ENCODE measurements at regions of chr7 and their contacts with region 1.

Region 1: DNA sequence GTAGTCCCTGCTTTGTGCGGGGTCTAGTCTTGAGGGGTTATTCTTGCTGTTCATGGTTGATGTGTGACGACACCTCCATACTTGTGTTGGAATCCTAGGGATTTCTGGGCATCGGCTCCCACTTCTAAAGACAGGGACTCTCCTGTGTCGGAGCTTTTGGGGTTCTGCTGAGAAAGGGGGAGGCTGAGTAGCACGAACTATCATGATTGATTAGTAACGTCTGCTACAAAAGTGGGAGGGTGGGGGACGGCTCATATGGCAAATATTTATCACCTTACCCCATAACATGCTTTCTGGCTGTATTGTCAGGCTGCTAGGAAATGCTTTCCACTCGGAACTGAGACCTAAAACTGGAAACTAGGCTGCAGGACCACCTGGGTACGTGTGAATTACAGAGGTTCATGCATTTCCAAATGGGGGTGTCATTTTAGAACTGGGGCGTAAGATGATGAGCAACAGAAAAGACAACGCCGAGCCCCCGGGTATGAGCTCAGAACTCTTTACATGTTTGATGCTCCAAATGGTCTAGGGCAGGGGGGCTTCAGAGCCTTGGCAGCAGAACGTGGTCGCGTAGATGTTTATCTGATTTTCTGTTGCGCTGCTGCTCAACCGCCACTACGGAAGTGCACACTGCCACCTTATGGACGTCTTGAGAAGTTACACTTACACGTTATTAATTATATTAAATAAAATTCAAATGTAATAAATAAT is 15.1 kb upstream of the NME8 start:
- DNase-seq: peak in 8 of 10 donors; percentile 22 to 90 (median 60)

Region 2: DNA sequence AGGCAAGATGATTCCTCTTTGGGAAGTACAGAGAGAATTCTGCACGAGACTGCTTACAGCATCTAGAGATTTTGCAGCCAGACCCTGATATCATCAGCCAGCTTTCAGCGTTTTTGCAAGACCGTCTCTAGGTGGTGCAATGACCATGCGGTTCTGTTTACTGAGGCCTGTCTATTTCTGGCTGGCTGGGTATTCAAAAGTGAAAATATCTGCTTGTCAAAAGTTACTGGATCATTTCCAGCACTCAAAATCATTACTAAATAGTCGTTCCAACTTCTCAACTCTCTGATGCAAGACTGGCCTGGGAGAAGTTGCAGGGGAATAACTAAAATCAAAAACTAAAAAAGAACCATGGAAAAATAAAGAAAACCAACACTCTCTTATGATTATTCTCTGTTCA is 624.7 kb before region 1 on chr7:
- intact Hi-C with region 1: loop called (anchors 2 kb)
- DNase-seq: peak in 7 of 10 donors; percentile 50 to 93 (median 69)

Region 3: GRCh38 chr7:37234928-37235327 is 598.3 kb before region 1 on chr7:
- intact Hi-C with region 1: loop called (anchors 10 kb)
- DNase-seq: peak in 1 of 10 donors; percentile 37

Region 4: DNA sequence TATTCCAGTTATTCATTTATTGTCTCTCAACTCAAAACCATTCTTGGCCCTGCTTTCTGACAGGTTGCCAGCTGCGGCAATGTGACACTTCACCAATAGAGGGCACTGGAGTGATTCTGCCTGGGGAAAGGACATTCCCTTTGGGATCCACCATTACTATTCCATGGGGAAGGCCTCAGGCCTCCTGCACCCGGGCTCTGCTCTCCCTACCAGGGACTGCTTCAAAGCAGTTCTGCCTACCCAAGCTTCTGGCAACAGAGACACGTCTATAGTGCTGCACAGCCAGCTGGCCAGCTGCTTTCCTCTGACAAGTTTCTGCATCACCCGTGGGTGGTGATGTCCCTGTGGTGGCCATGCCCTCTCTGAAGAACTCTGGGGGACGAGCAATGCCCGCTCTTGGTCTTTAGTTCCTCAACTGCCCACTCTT is 548.4 kb before region 1 on chr7:
- intact Hi-C with region 1: loop called (anchors 2 kb)
- DNase-seq: peak; percentile 39 to 95 (median 72)

Region 5: DNA sequence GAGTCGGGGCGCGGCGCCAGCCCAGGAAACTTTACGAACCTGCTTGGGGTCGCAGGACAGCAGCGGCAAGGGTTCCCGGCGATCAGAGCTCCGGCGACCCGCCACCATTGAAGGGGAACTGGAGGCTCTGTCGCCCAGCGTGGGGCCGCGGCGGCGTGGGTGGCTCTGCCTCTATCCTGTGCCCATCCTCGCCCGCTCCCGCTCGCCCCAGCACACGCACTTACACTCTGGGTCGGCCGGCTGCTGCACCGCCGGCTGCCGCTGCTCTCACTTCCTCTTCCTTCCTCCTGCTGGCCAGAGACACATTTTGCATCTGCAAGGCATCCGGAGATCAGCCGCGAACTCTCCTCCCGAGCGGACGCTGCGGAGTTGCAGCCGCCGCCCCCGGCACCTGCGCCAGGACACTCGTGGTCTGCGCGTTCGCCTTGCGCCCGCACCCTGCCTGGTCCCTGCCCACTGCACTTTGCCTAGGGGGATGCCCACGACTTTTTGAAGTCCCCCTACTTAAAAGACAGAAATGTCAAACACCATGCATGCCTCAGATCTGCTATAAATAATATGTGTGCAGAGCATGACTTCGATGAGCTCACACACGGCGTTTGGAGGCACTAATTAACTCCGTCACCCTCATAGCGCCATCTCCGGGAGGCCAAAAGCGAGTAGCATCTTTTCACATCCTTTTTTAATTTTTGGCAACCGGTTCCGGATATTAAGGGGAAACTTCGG is 384.5 kb before region 1 on chr7 and contains the start of gene ELMO1:
- intact Hi-C with region 1: loop called (anchors 10 kb)
- DNase-seq: peak; percentile 40 to 93 (median 58)

Region 6: GRCh38 chr7:37510043-37510634 is 323.1 kb before region 1 on chr7:
- intact Hi-C with region 1: loop called (anchors 10 kb)
- DNase-seq: peak in 1 of 10 donors; percentile 28

Region 7: GRCh38 chr7:37643876-37644275 is 189.4 kb before region 1 on chr7:
- intact Hi-C with region 1: loop called (anchors 10 kb)
- DNase-seq: peak in 2 of 10 donors; percentile 13 to 64